Activated CD8-positive, alpha-beta T cell treated with anti-CD3 and anti-CD28 coated beads for 36 hours (primary cell): ENCODE measurements at regions of chr1 and their contacts with region 1.

Region 1: GRCh38 chr1:115980998-115981993 is 5.0 kb downstream of the SLC22A15 start:
- DNase-seq: peak; percentile 18
- ATAC-seq: peak; percentile 53
- H3K4me3 Mint-ChIP-seq: no peak overlapping the region
- H3K27ac Mint-ChIP-seq: no peak overlapping the region
- H3K4me1 Mint-ChIP-seq: peaks cover 4% of the 10 kb centered on the region
- H3K27me3 Mint-ChIP-seq: peaks cover 21% of the 10 kb centered on the region
- CTCF ChIP-seq: peak; percentile 63

Region 2: DNA sequence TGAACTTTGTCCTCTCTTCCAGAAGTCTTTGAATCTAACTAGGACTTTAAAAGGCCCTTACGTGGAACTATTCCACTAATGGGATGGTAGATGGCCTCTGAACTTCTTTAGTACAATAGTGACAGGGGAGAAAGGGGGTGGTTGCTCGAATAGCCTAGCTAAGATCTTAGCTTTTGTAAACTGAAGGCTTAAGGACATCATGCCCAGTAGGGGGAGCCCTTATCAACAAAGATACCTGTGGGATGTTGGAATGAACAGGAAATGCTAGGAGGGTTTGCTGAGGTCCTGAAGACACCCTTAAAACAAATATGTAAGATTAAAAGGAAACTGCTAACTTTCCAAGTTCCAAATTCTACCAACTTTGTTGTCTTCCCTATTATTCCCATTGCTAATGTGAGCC is 173.6 kb before region 1 on chr1:
- CTCF ChIA-PET with region 1: interaction called, 31 read pairs
- POLR2A ChIA-PET with region 1: no interaction called
- intact Hi-C with region 1: loop called (anchors 5 kb)
- DNase-seq: peak; percentile 69
- ATAC-seq: peak; percentile 53
- H3K4me3 Mint-ChIP-seq: no peak overlapping the region
- H3K27ac Mint-ChIP-seq: no peak overlapping the region
- H3K4me1 Mint-ChIP-seq: no peaks in the 10 kb centered on the region
- H3K27me3 Mint-ChIP-seq: peaks cover 15% of the 10 kb centered on the region
- CTCF ChIP-seq: peak; percentile 71

Region 3: GRCh38 chr1:115991909-115992308 is 10.6 kb after region 1 on chr1:
- CTCF ChIA-PET with region 1: interaction called, 32 read pairs
- POLR2A ChIA-PET with region 1: interaction called, 3 read pairs
- intact Hi-C with region 1: no loop called
- DNase-seq: peak; percentile 2
- ATAC-seq: no peak
- H3K4me3 Mint-ChIP-seq: no peak overlapping the region
- H3K27ac Mint-ChIP-seq: no peak overlapping the region
- H3K4me1 Mint-ChIP-seq: peaks cover 6% of the 10 kb centered on the region
- H3K27me3 Mint-ChIP-seq: peaks cover 1% of the 10 kb centered on the region
- CTCF ChIP-seq: no peak

Region 4: GRCh38 chr1:116015454-116016078 is 34.3 kb after region 1 on chr1:
- CTCF ChIA-PET with region 1: interaction called, 17 read pairs
- POLR2A ChIA-PET with region 1: no interaction called
- intact Hi-C with region 1: no loop called
- DNase-seq: no peak
- ATAC-seq: no peak
- H3K4me3 Mint-ChIP-seq: no peak overlapping the region
- H3K27ac Mint-ChIP-seq: no peak overlapping the region
- H3K4me1 Mint-ChIP-seq: no peaks in the 10 kb centered on the region
- H3K27me3 Mint-ChIP-seq: peaks cover under 1% of the 10 kb centered on the region
- CTCF ChIP-seq: no peak

Region 5: GRCh38 chr1:116067566-116067890 is 86.2 kb after region 1 on chr1:
- CTCF ChIA-PET with region 1: no interaction called
- POLR2A ChIA-PET with region 1: no interaction called
- intact Hi-C with region 1: no loop called
- DNase-seq: no peak
- ATAC-seq: no peak
- H3K4me3 Mint-ChIP-seq: no peak overlapping the region
- H3K27ac Mint-ChIP-seq: no peak overlapping the region
- H3K4me1 Mint-ChIP-seq: no peaks in the 10 kb centered on the region
- H3K27me3 Mint-ChIP-seq: peaks cover 16% of the 10 kb centered on the region
- CTCF ChIP-seq: no peak